ENCODE measurements at regions of chr2 and their contacts with region 1.

Region 1: GRCh38 chr2:120885320-120885719 is 149.7 kb downstream of the GLI2 start:
- DNase-seq: no peak
- ATAC-seq: peak; percentile 29
- H3K4me3 Mint-ChIP-seq: no peak overlapping the region
- H3K27ac Mint-ChIP-seq: peak overlapping the region; percentile 56; the same call in 1 of the 2 replicates
- H3K4me1 Mint-ChIP-seq: peaks cover 50% of the 10 kb centered on the region
- H3K27me3 Mint-ChIP-seq: no peaks in the 10 kb centered on the region
- CTCF ChIP-seq: no peak

Region 2: DNA sequence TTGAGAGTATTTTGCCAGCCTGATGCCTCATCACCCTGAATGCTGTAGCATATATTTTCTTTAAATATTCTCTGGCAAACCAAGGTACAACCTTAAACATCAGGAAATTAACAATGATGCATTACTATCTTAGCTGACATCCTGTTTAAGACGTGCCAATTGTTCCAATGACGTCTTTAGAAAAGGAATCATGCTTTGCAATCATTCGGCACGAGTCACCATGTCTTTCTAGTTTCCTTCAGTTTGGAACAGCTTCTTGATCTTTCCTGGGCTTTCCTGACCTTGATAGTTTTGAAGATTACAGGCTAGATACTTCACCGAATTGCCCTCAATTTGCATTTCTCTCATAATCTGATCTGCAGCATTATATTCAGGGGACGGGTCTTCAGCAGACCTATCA is 237.8 kb before region 1 on chr2:
- CTCF ChIA-PET with region 1: no interaction called
- POLR2A ChIA-PET with region 1: no interaction called
- DNase-seq: no peak
- ATAC-seq: no peak
- H3K4me3 Mint-ChIP-seq: no peak overlapping the region
- H3K27ac Mint-ChIP-seq: no peak overlapping the region
- H3K4me1 Mint-ChIP-seq: peaks cover 7% of the 10 kb centered on the region
- H3K27me3 Mint-ChIP-seq: peaks cover 29% of the 10 kb centered on the region
- CTCF ChIP-seq: no peak

Region 3: GRCh38 chr2:120867290-120868241 is 17.8 kb before region 1 on chr2:
- CTCF ChIA-PET with region 1: interaction called, 13 read pairs
- POLR2A ChIA-PET with region 1: no interaction called
- DNase-seq: peak; percentile 55
- ATAC-seq: peak; percentile 56
- H3K4me3 Mint-ChIP-seq: peak overlapping the region; percentile 49
- H3K27ac Mint-ChIP-seq: no peak overlapping the region; the same call in 1 of the 2 replicates
- H3K4me1 Mint-ChIP-seq: peaks cover 53% of the 10 kb centered on the region
- H3K27me3 Mint-ChIP-seq: no peaks in the 10 kb centered on the region
- CTCF ChIP-seq: no peak

Region 4: DNA sequence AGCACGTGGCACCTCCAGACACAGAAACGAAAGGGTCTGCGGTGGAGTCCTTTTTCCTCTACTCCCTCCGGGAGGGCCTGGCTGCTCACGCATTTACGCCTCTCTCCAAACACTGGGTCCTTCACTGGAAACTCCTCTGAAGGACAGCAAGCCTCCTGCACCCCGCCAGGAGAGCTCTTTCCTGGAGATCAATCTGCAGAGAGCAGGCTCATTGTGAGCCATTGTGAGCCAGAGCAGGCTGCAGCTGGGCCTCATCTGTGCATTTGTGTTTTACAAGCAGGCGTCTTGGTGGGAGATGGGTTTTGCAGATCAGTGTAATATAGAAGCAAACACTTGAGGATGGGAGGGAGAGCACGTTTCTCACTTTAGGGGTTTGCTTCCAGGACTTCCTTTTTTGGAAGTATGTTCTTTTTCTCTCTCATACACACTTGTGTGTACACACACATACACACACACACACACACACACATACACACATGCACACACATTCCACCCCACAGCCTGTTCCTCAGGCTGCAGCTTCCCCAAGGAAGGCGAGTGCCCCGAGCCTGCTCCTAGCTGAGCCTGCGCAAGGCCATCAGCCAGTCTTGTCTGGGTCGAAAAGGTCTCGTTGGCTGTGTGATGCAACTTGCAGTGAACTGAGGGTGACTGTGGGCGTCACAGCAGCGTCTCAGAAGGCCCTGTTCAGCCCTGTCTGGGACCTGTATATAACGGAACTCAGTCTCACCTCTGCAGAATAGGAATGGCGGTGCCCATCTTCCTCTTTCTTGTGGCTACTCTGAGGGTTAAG is 13.8 kb after region 1 on chr2:
- CTCF ChIA-PET with region 1: interaction called, 18 read pairs
- POLR2A ChIA-PET with region 1: interaction called, 4 read pairs
- DNase-seq: no peak
- ATAC-seq: peak; percentile 73
- H3K4me3 Mint-ChIP-seq: no peak overlapping the region
- H3K27ac Mint-ChIP-seq: peak overlapping the region; percentile 95
- H3K4me1 Mint-ChIP-seq: peaks cover 84% of the 10 kb centered on the region
- H3K27me3 Mint-ChIP-seq: no peaks in the 10 kb centered on the region
- CTCF ChIP-seq: no peak

Region 5: GRCh38 chr2:121235542-121235941 is 350.2 kb after region 1 on chr2:
- CTCF ChIA-PET with region 1: no interaction called
- POLR2A ChIA-PET with region 1: no interaction called
- DNase-seq: no peak
- ATAC-seq: no peak
- H3K4me3 Mint-ChIP-seq: no peak overlapping the region
- H3K27ac Mint-ChIP-seq: no peak overlapping the region
- H3K4me1 Mint-ChIP-seq: no peaks in the 10 kb centered on the region
- H3K27me3 Mint-ChIP-seq: no peaks in the 10 kb centered on the region
- CTCF ChIP-seq: no peak